Endothelial cell of umbilical vein (primary cell): ENCODE measurements at regions of chr11 and their contacts with region 1.

Region 1: DNA sequence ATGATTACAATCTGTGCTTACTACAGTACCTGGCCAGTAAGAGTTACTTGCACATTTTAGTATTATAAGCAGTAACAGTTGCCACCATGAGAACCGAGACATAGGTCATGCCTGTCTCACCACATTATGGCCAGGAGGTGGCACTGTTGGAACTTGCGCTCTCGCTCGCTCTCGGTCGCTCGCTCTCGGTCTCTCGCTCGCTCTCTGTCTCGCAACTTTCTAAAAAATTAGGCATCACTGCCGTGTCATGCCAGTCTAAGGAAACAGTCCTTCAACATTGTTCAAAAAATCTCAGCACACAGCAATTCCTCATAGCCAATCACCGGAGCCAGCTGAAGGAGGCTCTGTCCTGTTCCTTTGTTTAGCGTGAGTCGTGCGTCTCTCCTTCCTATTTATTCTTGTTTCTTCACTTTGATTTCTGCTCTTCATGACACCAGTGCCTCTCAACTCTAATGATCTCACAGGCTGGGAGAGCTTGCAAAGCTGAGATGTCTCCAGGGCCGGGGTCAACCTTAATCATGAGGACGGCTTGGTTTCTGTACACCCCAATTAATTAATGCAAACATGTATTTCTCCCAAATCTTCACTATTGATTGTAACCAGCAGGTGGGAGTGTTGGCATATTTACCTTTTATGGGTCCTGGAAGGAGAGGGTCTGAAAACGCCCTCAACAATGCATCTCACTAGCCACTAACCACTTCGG is 6.3 kb upstream of the ADAMTS8 start:
- DNase-seq: peak; percentile 87
- H3K4me3 ChIP-seq: peak overlapping the region; percentile 51 to 70 (median 51)
- H3K27ac ChIP-seq: peak overlapping the region; percentile 6
- H3K4me1 ChIP-seq: no peaks in the 10 kb centered on the region
- H3K27me3 ChIP-seq: peaks cover 10 to 12% of the 10 kb centered on the region in 2 experiments
- CTCF ChIP-seq: peak; percentile 79 to 87
- POLR2A ChIP-seq: no peak

Region 2: DNA sequence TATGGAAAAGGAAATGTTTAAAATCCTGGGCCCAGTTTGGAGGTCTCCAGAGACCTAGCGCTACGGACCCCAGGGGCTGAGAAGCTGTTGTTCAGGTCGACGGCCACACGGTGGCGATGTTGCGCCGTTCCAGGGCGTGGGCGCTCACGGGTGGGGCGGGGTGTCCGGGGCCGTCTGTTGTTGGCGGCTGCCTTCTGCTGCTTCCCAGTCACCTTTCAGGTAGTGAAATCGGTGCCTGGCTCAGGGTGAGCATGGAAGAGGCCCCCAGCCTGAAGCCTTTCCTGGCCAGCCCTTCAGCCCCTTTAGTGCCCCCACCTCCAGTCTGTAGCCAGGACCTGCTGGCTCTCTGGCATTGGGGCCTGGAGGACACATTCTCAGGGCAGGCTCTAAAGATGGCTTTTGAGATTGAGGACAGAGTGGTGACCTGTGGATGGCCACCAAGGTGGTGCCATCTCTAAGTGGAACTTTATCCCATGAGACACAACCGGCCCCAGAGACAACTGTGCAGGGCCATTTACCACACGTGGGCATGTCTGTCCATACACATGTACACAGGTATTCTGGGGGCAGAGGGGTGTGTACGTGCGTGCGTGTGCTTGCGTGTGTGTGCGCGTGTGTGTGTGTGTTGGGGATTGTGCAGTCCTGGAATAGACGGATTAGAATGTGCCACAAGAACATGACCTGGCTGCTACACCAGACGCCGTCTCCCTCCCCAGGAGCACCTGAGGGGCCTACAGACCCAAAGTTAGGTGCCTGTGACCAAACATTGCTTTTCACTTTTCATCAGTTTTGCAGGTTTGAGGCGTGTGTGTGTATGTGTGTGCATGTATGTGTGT is 221.3 kb before region 1 on chr11:
- CTCF ChIA-PET with region 1: interaction called, 28 read pairs
- POLR2A ChIA-PET with region 1: no interaction called
- dilution Hi-C with region 1: no loop called
- intact Hi-C with region 1: loop called (anchors 1 kb)
- DNase-seq: peak; percentile 40
- H3K4me3 ChIP-seq: no peak overlapping the region
- H3K27ac ChIP-seq: no peak overlapping the region
- H3K4me1 ChIP-seq: no peaks in the 10 kb centered on the region
- H3K27me3 ChIP-seq: peaks cover 3 to 12% of the 10 kb centered on the region in 2 experiments
- CTCF ChIP-seq: peak; percentile 68 to 95
- POLR2A ChIP-seq: no peak

Region 3: GRCh38 chr11:130522284-130522961 is 87.8 kb after region 1 on chr11:
- CTCF ChIA-PET with region 1: no interaction called
- POLR2A ChIA-PET with region 1: no interaction called
- dilution Hi-C with region 1: no loop called
- intact Hi-C with region 1: loop called (anchors 2 kb)
- DNase-seq: peak; percentile 83
- H3K4me3 ChIP-seq: no peak overlapping the region
- H3K27ac ChIP-seq: no peak overlapping the region
- H3K4me1 ChIP-seq: peaks cover 4% of the 10 kb centered on the region
- H3K27me3 ChIP-seq: no peaks in the 10 kb centered on the region
- CTCF ChIP-seq: no peak
- POLR2A ChIP-seq: no peak

Region 4: DNA sequence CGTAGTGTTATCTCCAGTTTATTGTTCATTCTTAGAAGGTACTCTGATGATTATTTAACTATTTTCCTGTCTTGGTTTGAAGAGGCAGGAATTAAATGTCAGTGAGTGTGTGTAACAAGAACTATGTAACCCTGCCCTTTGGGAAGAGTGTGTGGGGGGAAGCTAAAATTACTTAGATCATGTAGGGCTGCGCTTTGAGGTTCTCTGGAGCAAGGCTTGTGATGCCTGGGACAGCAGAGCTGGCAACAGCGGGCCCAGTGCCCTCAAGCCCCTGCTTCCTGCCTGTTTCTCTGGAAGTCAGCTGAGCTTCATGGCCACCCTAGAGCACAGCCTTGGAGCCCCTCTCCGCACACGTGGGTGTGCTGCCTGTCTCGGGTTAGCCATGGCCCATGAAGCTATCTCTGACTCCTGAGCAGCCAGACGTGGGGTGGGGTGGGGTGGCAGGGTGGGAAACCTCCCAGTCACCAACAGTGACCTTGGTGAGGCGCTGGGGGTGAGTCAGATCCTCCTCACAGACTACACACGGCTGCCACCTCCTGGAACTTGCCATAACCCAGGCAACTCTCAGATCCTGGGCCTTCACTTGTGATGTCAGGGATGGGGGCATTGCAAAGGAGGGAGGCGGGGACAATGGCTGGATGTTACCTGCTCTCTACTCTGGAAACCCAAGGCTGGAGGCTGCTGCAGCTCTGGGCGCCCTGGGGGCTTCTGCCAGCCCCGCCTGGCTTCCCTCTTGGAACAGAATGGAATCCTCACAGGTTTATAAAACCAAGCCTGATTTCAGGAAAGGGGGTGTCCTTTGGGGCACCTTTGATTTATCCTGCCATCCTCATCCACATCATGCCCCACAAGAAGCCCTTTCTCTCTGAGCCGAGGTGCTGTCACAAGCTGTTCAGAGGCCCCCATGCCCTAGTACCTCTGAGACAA is 393.0 kb after region 1 on chr11:
- CTCF ChIA-PET with region 1: interaction called, 55 read pairs
- POLR2A ChIA-PET with region 1: no interaction called
- dilution Hi-C with region 1: no loop called
- intact Hi-C with region 1: loop called (anchors 1 kb)
- DNase-seq: peak; percentile 65
- H3K4me3 ChIP-seq: no peak overlapping the region
- H3K27ac ChIP-seq: no peak overlapping the region
- H3K4me1 ChIP-seq: no peaks in the 10 kb centered on the region
- H3K27me3 ChIP-seq: no peaks in the 10 kb centered on the region
- CTCF ChIP-seq: peak; percentile 41 to 69
- POLR2A ChIP-seq: no peak

Region 5: GRCh38 chr11:130871616-130872015 is 436.9 kb after region 1 on chr11:
- CTCF ChIA-PET with region 1: interaction called, 17 read pairs
- POLR2A ChIA-PET with region 1: no interaction called
- dilution Hi-C with region 1: loop called (anchors 25 kb)
- intact Hi-C with region 1: no loop called
- DNase-seq: no peak
- H3K4me3 ChIP-seq: no peak overlapping the region
- H3K27ac ChIP-seq: no peak overlapping the region
- H3K4me1 ChIP-seq: peaks cover 19% of the 10 kb centered on the region
- H3K27me3 ChIP-seq: no peaks in the 10 kb centered on the region
- CTCF ChIP-seq: no peak
- POLR2A ChIP-seq: no peak

Region 6: GRCh38 chr11:131668500-131669400 is 1234.1 kb after region 1 on chr11:
- CTCF ChIA-PET with region 1: interaction called, 74 read pairs
- POLR2A ChIA-PET with region 1: no interaction called
- dilution Hi-C with region 1: no loop called
- intact Hi-C with region 1: no loop called
- DNase-seq: peak; percentile 32
- H3K4me3 ChIP-seq: no peak overlapping the region
- H3K27ac ChIP-seq: no peak overlapping the region
- H3K4me1 ChIP-seq: no peaks in the 10 kb centered on the region
- H3K27me3 ChIP-seq: no peaks in the 10 kb centered on the region
- CTCF ChIP-seq: peak; percentile 82 to 83
- POLR2A ChIP-seq: no peak